Activated B cell treated with CpG ODN at 0.5 μM for 24 hours (primary cell): ENCODE measurements at regions of chr9 and their contacts with region 1.

Region 1: DNA sequence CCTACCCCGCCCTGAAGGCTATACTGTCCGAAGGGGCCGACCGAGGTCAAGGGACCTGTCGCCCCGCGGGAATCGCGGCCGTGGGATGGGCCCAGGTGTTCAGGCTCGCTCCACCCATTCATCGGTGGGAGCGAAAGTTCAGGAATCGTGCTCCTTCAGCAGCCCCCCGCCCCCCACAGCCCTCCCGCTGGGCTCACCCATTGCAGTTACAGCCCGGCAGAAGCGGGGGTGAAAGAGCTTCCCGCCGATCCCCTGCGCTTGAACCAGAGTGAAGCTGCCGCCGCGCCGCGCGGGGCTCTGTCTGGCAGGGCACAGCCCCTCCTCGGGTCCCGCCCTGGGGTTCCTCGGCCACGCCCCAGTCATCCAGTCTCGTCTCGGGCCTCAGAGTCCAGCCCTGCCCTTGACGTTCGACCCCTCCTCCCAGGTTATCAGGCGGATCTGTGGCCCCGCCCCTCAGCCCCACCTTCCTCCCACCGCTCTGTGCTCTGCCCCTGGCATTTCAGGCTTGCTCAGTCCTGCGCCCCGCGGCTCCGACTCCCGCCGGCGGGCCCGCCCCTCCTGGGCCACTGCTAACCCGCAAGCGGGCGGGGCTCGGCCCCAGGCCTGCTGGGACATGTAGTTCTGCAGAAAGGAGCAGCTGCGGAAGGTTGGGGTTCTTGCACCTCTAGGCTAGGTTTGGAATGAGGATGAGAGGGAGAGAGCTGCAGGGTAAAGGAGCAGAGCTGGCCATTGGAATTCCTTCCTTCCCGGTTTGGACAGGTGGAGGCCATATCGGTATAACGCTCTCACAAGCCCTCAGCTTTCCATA is at the start of gene MYORG:
- DNase-seq: peak; percentile 94
- ATAC-seq: peak; percentile 85
- H3K4me3 Mint-ChIP-seq: peak within 1 kb of the TSS; percentile 93
- H3K27ac Mint-ChIP-seq: peak within 1 kb of the TSS; percentile 75
- H3K4me1 Mint-ChIP-seq: peaks cover 42% of the 10 kb centered on the region
- H3K27me3 Mint-ChIP-seq: peaks cover 2% of the 10 kb centered on the region
- CTCF ChIP-seq: no peak
- total RNA-seq, gene MYORG: 0.24 and 0.27 TPM in 2 replicates

Region 2: DNA sequence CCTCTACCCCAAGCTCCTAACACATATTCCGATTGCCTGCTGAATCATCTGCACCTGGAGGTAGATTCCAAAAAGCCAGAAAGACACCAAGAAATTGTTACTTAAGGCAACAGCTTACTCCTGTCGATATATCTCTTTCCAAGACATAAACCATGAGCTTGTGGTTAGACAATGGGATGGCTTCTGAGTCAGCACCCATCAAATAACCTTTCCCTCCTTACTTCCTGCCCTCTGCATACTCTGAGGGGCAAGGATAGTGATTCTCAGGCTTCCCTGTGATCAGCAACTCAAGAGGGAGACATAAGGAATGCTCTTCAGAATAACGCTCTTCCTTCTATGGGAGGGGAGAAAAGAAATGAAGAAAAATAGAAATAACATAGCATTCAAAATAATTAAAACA is 1522.5 kb before region 1 on chr9:
- CTCF ChIA-PET with region 1: no interaction called
- POLR2A ChIA-PET with region 1: no interaction called
- intact Hi-C with region 1: no loop called
- DNase-seq: no peak
- ATAC-seq: no peak
- H3K4me3 Mint-ChIP-seq: no peak overlapping the region
- H3K27ac Mint-ChIP-seq: no peak overlapping the region
- H3K4me1 Mint-ChIP-seq: no peaks in the 10 kb centered on the region
- H3K27me3 Mint-ChIP-seq: peaks cover 5% of the 10 kb centered on the region
- CTCF ChIP-seq: no peak

Region 3: GRCh38 chr9:33623658-33624586 is 752.9 kb before region 1 on chr9:
- CTCF ChIA-PET with region 1: no interaction called
- POLR2A ChIA-PET with region 1: no interaction called
- intact Hi-C with region 1: loop called (anchors 5 kb)
- DNase-seq: peak; percentile 45
- ATAC-seq: peak; percentile 92
- H3K4me3 Mint-ChIP-seq: no peak overlapping the region
- H3K27ac Mint-ChIP-seq: no peak overlapping the region
- H3K4me1 Mint-ChIP-seq: peaks cover 4% of the 10 kb centered on the region
- H3K27me3 Mint-ChIP-seq: peaks cover 33% of the 10 kb centered on the region
- CTCF ChIP-seq: no peak

Region 4: DNA sequence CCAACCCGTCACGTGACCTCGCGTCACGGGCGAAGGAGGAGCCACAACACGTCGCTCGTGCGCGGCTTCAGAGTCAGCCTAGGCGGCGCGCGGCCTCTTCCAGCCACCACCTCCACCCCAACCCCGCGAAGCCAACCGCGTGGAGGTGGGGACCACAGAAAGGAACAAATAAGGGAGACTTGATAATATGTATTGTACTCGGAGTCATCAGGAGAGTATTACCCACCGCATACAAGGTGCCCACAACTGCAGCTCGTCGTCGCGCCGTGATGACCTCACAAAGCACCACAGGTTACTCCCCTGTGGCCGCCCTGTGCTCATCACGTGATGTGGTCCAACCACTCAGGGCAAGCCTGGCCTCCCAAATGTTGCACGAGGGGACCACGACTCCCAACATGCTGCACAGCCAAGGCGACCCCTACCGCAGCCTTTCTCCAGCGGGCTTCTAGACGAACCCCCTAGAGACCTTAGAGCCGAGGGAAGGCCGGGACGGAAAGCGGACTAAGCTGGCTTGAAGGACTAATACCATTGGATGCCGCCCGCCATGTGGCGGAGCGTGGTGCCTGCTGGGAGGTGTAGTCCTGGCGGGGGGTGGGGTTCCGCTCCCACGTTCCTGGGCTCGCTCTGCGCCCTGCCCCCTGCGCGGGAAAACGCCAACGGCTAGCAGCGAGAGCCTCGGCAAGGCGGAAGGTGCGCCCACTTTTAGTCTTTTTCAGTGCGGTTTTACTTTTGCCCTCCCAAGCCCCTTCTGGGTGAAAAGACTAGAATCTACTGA is 327.7 kb before region 1 on chr9:
- CTCF ChIA-PET with region 1: no interaction called
- POLR2A ChIA-PET with region 1: interaction called, 3 read pairs
- intact Hi-C with region 1: loop called (anchors 1 kb)
- DNase-seq: peak; percentile 97
- ATAC-seq: peak; percentile 80
- H3K4me3 Mint-ChIP-seq: peak overlapping the region; percentile 99
- H3K27ac Mint-ChIP-seq: peak overlapping the region; percentile 100
- H3K4me1 Mint-ChIP-seq: peaks cover 25% of the 10 kb centered on the region
- H3K27me3 Mint-ChIP-seq: no peaks in the 10 kb centered on the region
- CTCF ChIP-seq: no peak

Region 5: DNA sequence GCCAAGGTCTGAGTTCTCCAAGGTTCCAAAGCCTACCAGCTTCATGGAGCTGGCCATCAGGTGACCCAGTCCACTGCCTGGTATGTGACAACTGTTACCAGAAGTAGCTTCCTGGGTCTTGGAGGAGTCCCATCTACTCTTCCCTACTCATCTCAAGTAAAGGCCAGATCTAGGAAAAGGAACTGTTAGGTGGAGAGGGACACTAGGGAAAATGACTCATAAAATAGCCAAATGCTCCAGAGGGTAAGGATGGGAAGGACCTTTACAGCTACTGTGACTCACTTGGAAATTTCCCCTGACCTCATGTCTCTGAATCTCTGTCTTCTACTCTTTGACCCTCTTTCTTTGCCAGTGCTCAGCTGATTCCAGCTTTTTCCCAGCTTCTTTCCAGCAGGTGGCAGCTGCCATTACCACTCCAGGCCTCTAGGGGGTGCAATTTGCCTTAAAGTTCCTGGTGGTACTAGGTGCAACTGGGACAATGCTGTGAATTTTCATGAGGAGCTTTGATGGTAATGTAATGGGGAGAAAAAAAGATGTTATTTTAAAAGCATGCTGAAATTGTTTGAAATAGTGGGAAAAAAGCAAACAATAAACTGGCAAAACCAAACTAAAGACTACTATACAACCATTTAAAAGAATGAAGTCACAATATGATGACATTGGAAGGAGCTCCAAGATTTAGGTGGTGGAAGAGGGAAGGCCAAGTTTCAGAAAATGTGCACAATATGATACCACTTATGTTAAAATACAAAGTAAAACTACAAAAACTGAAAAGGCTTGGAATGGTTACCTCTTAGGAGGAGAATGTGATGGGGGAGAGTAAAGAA is 27.0 kb after region 1 on chr9:
- CTCF ChIA-PET with region 1: interaction called, 11 read pairs
- POLR2A ChIA-PET with region 1: no interaction called
- intact Hi-C with region 1: no loop called
- DNase-seq: no peak
- ATAC-seq: peak; percentile 56
- H3K4me3 Mint-ChIP-seq: no peak overlapping the region
- H3K27ac Mint-ChIP-seq: no peak overlapping the region
- H3K4me1 Mint-ChIP-seq: no peaks in the 10 kb centered on the region
- H3K27me3 Mint-ChIP-seq: no peaks in the 10 kb centered on the region
- CTCF ChIP-seq: peak; percentile 99

Region 6: DNA sequence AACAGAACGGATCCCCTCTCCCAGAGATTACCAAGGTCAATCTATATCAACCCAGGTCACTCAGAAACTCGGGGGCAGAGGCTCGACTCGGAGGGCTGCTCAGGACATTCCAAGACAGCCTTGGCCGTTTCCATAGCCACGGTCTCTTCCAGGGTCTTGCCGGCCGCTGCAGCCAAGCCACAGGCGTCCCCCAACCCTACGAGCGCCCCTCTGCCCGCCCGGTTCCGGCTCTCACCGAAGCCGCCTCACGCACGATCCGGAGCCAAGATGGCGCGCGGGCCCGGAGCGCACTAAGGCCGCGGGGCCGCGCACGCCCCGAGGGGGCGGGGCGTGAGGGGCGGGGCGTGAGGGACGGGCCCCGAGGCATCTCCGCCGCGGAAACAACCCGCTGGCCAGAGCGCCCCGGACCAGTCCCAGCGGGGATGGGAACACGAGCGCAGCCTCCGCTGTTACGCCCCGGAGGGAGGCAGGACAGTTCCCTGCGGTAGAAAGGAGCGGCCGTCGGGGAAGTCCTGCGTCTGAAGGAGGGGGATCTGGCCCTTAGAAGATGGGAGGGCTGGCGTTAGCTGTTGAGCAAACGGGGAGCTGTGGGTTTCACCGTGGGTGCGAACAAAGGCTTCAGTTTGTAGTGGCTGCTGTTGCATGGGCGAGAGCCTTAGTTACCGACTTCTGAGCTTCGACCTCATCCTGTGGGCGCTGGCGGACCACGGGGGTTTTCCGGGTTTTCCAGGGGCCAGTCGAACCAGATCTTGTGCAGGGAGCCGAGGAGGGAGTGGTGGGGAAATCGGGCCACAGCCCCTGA is 235.2 kb after region 1 on chr9 and contains the start of gene RPP25L:
- CTCF ChIA-PET with region 1: no interaction called
- POLR2A ChIA-PET with region 1: no interaction called
- intact Hi-C with region 1: loop called (anchors 1 kb)
- DNase-seq: peak; percentile 90
- ATAC-seq: peak; percentile 96
- H3K4me3 Mint-ChIP-seq: peak within 1 kb of the TSS; percentile 86
- H3K27ac Mint-ChIP-seq: peak within 1 kb of the TSS; percentile 90
- H3K4me1 Mint-ChIP-seq: peaks cover 19% of the 10 kb centered on the region
- H3K27me3 Mint-ChIP-seq: no peaks in the 10 kb centered on the region
- CTCF ChIP-seq: no peak
- total RNA-seq, gene RPP25L: 17.5 and 18.9 TPM in 2 replicates

Region 7: DNA sequence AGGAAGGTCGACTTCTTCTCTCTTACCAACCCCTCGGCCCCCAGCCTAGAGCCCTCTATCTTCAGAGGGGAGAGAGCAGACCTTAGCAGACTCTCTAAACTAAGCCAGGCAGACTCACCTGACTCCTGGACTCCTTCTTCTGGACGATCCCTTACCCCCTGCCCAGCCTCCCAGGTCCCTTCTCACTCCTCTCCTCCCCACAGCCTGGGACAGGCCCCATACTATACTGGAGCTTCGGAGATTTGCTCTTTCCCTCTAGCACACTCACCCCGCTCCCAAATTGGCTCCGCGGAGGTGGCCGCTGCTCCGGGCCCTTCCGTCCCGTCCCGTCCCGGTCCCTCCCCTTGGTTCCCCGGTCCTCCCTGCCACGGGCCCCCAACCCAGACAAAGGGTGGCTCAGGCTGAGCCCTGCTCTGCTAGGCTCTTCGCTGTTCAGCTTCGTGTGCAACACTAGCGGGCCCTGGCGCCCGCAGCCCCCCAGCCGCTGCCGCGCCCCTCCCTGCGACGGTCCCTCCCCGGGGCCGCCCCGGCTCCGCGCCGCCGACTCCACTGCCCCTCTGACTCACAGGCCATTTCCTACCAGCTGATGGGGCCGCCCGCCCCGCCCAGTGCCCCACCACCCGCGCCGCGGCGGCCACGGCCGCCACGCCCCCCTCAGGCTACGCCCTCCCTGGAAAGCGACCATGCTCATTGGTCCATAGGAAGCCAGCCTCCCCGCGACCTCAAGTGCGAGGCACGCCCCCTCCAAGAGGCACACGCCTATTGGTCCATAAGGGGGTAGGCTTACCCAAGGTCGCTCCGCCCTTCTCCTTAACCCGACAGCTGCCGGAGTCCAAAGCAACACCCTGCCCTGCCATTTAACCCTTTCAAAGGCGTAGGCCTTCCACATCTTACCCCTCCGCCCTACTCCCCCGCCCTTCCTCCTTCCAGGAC is 734.5 kb after region 1 on chr9:
- CTCF ChIA-PET with region 1: no interaction called
- POLR2A ChIA-PET with region 1: no interaction called
- intact Hi-C with region 1: loop called (anchors 5 kb)
- DNase-seq: peak; percentile 86
- ATAC-seq: peak; percentile 81
- H3K4me3 Mint-ChIP-seq: peak overlapping the region; percentile 83
- H3K27ac Mint-ChIP-seq: peak overlapping the region; percentile 88
- H3K4me1 Mint-ChIP-seq: peaks cover 62% of the 10 kb centered on the region
- H3K27me3 Mint-ChIP-seq: no peaks in the 10 kb centered on the region
- CTCF ChIP-seq: no peak